MCF 10A (cell line): ENCODE measurements at regions of chr5 and their contacts with region 1.

Region 1: DNA sequence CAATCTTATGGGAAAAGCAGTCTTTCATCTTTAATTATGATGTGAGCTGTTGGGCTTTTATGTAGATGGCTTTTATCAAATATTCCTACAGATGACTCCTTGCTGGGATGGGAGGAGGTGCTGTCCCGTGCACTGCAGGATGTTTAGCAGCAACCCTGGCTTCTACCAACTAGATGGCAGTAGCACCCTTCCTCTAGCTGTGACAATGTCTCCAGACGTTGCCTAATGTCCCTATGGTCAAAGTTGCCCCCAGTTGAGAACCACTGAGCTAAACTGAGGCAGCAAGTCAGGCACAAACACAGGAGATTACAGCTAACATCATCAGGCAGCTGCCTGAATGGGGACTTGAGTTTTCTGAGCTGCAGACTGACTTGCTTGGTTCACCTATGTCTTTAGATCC is 401.9 kb upstream of the PDE4D start:
- DNase-seq: peak; percentile 35
- H3K4me3 Mint-ChIP-seq: no peak overlapping the region
- H3K27ac Mint-ChIP-seq: no peak overlapping the region
- H3K4me1 Mint-ChIP-seq: no peaks in the 10 kb centered on the region
- H3K27me3 Mint-ChIP-seq: peaks cover 90% of the 10 kb centered on the region
- CTCF ChIP-seq: peak; percentile 48

Region 2: GRCh38 chr5:60382716-60383115 is 87.3 kb after region 1 on chr5:
- CTCF ChIA-PET with region 1: interaction called, 7 read pairs
- POLR2A ChIA-PET with region 1: no interaction called
- intact Hi-C with region 1: loop called (anchors 1 kb)
- DNase-seq: peak; percentile 35
- H3K4me3 Mint-ChIP-seq: no peak overlapping the region
- H3K27ac Mint-ChIP-seq: no peak overlapping the region
- H3K4me1 Mint-ChIP-seq: no peaks in the 10 kb centered on the region
- H3K27me3 Mint-ChIP-seq: peaks cover 85% of the 10 kb centered on the region
- CTCF ChIP-seq: peak; percentile 34

Region 3: GRCh38 chr5:60586307-60586901 is 291.0 kb after region 1 on chr5:
- CTCF ChIA-PET with region 1: no interaction called
- POLR2A ChIA-PET with region 1: no interaction called
- intact Hi-C with region 1: loop called (anchors 5 kb)
- DNase-seq: peak; percentile 8
- H3K4me3 Mint-ChIP-seq: no peak overlapping the region
- H3K27ac Mint-ChIP-seq: no peak overlapping the region
- H3K4me1 Mint-ChIP-seq: no peaks in the 10 kb centered on the region
- H3K27me3 Mint-ChIP-seq: no peaks in the 10 kb centered on the region
- CTCF ChIP-seq: peak; percentile 11